Ovary (tissue), 10 donors: ENCODE measurements at regions of chr5 and their contacts with region 1.

Region 1: GRCh38 chr5:130077007-130077406 is 172.7 kb downstream of the CHSY3 start:
- DNase-seq: no peak
- H3K4me3 ChIP-seq: no peak overlapping the region
- H3K27ac ChIP-seq: no peak overlapping the region
- H3K4me1 ChIP-seq: no peaks in the 10 kb centered on the region
- H3K27me3 ChIP-seq: no peaks in the 10 kb centered on the region
- CTCF ChIP-seq: no peak
- EP300 ChIP-seq: no peak
- POLR2A ChIP-seq: no peak

Region 2: DNA sequence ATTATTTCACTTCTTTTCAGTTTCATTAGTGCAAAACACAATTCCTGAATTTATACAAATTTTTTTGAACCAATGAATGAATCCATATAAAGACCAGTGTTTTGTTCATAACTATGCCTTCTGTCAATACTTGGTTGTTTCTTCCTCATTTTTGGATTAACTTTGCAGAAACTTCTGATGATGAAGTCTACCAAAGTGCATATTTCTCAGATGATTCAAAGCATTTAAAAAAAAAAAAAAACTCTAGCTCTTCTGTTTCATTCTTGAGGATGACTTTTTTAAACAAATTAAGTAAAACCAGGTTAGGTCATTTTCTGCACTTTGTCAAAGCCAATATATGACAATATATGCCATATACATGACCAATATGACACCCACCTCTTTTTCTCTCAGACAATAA is 80.1 kb before region 1 on chr5:
- intact Hi-C with region 1: no loop called
- DNase-seq: no peak
- H3K4me3 ChIP-seq: no peak overlapping the region
- H3K27ac ChIP-seq: no peak overlapping the region
- H3K4me1 ChIP-seq: no peaks in the 10 kb centered on the region
- H3K27me3 ChIP-seq: no peaks in the 10 kb centered on the region
- CTCF ChIP-seq: no peak
- EP300 ChIP-seq: no peak
- POLR2A ChIP-seq: no peak

Region 3: DNA sequence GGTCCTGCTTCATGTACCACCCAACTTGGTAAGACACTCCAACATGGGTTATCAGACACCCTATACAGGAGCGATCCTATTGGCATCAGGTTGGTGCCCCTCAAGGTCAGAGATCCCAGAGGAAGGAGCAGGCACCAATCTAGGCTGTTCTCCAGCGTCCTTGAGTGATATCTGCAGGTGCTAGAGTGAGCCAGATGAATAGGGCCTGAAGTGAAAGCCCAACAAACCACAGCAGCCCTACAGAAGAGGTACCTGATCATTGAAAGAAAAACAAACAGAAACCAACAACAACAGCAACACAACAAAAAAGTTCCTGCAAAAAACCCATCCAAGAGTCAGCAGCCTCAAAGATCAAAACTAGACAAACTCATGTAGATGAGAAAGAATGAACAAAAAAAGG is 503.3 kb after region 1 on chr5:
- intact Hi-C with region 1: loop called in 1 of 4 experiments (anchors 10 kb)
- DNase-seq: no peak
- H3K4me3 ChIP-seq: no peak overlapping the region
- H3K27ac ChIP-seq: no peak overlapping the region
- H3K4me1 ChIP-seq: no peaks in the 10 kb centered on the region
- H3K27me3 ChIP-seq: no peaks in the 10 kb centered on the region
- CTCF ChIP-seq: no peak
- EP300 ChIP-seq: no peak
- POLR2A ChIP-seq: no peak